Activated CD8-positive, alpha-beta memory T cell treated with anti-CD3 and anti-CD28 coated beads, Interleukin-2, amount 10 ng/mL, durations not matched to agents 7 days and 5 days (primary cell): ENCODE measurements at regions of chr6 and their contacts with region 1.

Region 1: DNA sequence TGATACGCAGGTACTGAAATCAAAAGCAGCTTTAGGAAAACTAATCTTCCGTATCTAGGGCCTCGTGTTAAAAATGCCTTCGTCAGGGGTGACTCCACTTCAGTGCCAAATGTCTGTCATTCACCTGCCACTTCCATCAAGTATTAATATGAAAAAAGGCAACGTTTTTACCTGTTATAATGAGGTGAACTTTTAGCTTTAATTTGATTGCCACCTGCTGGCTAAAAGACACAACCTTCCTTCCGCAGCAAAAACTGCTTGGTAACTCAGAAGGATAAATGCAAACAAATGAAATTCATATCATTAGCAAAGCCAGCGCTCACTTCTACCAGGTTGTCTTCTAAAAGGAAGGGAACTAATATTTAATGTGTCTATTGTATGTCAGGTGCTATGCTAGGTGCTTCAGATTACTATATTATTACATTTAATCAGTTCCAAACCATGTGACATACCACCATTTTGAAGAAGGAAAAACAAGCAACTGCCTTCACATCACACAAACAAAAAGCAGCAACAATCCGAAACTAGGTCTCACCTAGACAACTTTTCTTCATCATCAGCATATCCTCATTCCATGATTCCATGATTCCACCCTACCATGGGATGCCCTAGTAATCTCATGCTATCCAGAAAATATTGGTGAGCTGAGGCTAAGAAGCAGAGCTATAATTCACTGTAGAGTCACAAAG is 20.6 kb upstream of the ARHGAP18 start:
- DNase-seq: peak; percentile 54
- ATAC-seq: peak; percentile 72
- H3K4me3 Mint-ChIP-seq: no peak overlapping the region
- H3K27ac Mint-ChIP-seq: peak overlapping the region; percentile 74
- H3K4me1 Mint-ChIP-seq: peaks cover 17% of the 10 kb centered on the region
- H3K27me3 Mint-ChIP-seq: no peaks in the 10 kb centered on the region

Region 2: GRCh38 chr6:129498950-129499842 is 231.4 kb before region 1 on chr6:
- CTCF ChIA-PET with region 1: interaction called, 39 read pairs
- DNase-seq: no peak
- ATAC-seq: peak; percentile 81
- H3K4me3 Mint-ChIP-seq: no peak overlapping the region
- H3K27ac Mint-ChIP-seq: peak overlapping the region; percentile 9
- H3K4me1 Mint-ChIP-seq: peaks cover 28% of the 10 kb centered on the region
- H3K27me3 Mint-ChIP-seq: no peaks in the 10 kb centered on the region

Region 3: DNA sequence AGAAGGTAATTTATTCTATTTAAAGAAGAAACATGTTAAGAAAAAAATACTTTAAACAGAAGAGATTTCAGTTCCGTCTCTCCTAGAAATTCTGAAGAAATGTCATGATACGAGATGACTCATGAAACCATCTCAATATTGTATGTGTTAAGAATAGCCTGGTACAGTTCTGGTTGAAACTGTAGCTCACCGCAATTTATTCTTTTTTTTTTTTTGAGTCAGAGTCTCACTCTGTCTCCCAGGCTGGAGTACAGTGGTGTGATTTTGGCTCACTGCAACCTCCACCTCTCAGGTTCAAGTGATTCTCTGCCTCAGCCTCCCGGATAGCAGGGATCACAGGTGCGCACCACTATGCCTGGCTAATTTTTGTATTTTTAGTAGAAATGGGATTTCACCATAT is 124.0 kb before region 1 on chr6:
- CTCF ChIA-PET with region 1: interaction called, 21 read pairs
- DNase-seq: no peak
- ATAC-seq: peak; percentile 71
- H3K4me3 Mint-ChIP-seq: no peak overlapping the region
- H3K27ac Mint-ChIP-seq: no peak overlapping the region
- H3K4me1 Mint-ChIP-seq: peaks cover 17% of the 10 kb centered on the region
- H3K27me3 Mint-ChIP-seq: no peaks in the 10 kb centered on the region

Region 4: DNA sequence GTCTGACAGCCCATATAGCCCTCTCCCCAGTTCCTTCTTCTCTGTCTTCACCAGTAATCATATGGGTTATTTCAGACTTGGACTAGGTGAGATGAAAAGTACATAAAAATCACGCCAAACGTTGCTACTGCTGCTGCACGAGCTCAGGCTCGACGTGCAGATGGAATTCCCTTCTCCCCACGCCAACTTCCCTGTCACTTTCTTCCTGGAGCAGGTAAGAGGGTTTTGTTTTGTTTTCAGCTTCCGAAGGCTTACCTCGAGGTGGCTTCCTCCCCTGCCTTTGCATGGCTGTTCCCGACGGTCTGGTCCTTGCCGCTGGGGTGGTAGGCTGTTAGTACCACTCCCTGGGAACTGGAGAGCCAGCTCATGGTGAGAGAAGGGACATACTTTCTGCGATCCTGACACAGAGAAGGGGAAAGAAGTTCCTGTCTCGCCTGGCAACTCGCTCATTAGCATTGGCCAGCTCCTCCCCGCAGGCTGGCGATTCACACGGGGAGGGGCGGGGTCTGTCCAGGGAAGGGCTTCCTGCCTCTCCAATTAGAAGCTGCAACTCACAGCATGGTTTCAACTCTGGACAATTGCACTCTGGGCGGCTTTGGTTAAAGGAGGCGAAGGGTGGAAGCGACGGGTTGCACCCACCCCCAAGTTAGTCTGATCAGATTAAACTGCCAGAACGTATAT is 20.7 kb before region 1 on chr6 and contains the start of gene ARHGAP18:
- CTCF ChIA-PET with region 1: interaction called, 60 read pairs
- DNase-seq: peak; percentile 90
- ATAC-seq: peak; percentile 97
- H3K4me3 Mint-ChIP-seq: peak within 1 kb of the TSS; percentile 92
- H3K27ac Mint-ChIP-seq: peak within 1 kb of the TSS; percentile 87
- H3K4me1 Mint-ChIP-seq: peaks cover 49% of the 10 kb centered on the region
- H3K27me3 Mint-ChIP-seq: no peaks in the 10 kb centered on the region
- total RNA-seq, gene ARHGAP18: 14.1 to 20.8 TPM

Region 5: DNA sequence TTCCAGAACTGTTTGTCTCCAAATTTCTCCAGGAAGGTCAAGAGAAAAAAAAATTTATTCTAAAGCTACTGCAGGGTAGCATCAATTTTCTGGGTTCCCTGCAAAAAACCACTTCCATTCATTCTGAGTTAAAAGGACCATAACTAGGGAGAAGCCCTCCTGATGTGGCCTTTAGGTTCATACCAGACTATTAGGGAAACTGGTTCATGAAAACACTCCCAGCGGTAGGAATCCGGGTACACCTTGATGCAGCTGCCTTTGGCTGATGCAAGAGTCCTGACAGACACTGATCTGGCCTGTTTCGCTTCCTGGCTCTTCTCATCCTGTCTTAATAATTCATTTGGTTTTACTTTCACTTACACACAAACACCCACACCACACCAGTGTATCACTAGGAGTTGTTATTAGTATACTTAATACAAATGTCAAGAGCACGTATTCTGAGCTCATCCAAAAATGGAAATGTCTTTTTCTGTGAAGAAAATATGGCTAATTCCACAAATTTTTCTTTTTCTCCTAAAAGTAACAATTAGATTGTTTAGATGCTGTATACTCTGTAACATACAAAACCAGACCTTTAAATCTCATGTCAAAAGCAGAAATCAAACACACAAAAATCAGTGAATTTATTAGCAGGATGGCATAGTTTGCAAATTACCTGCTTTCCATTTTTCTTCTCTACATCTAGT is 17.7 kb after region 1 on chr6:
- CTCF ChIA-PET with region 1: interaction called, 14 read pairs
- DNase-seq: peak; percentile 82
- ATAC-seq: peak; percentile 95
- H3K4me3 Mint-ChIP-seq: peak overlapping the region; percentile 72
- H3K27ac Mint-ChIP-seq: peak overlapping the region; percentile 92
- H3K4me1 Mint-ChIP-seq: peaks cover 50% of the 10 kb centered on the region
- H3K27me3 Mint-ChIP-seq: no peaks in the 10 kb centered on the region